Left colon (tissue), 2 donors: ENCODE measurements at regions of chr17 and their contacts with region 1.

Region 1: GRCh38 chr17:50269477-50270434 is 4.5 kb upstream of the TMEM92 start:
- DNase-seq: peak; percentile 32 to 80
- ATAC-seq: peak; percentile 33

Region 2: GRCh38 chr17:50200457-50201275 is 69.1 kb before region 1 on chr17:
- intact Hi-C with region 1: loop called (anchors 2 to 5 kb)
- DNase-seq: peak; percentile 86 to 93
- ATAC-seq: peak; percentile 82

Region 3: DNA sequence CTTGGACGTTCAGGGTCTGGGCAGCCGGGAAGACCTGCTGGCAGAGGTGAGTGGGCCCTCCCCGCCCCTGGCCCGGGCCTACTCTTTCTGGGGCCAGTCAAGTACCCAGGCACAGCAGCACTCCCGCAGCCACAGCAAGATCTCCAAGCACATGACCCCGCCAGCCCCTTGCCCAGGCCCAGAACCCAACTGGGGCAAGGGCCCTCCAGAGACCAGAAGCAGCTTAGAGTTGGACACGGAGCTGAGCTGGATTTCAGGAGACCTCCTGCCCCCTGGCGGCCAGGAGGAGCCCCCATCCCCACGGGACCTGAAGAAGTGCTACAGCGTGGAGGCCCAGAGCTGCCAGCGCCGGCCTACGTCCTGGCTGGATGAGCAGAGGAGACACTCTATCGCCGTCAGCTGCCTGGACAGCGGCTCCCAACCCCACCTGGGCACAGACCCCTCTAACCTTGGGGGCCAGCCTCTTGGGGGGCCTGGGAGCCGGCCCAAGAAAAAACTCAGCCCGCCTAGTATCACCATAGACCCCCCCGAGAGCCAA is 356.4 kb after region 1 on chr17:
- intact Hi-C with region 1: no loop called
- DNase-seq: peak in 1 of 2 donors; percentile 75
- ATAC-seq: no peak